Panc1 (cell line): ENCODE measurements at regions of chr3 and their contacts with region 1.

Region 1: DNA sequence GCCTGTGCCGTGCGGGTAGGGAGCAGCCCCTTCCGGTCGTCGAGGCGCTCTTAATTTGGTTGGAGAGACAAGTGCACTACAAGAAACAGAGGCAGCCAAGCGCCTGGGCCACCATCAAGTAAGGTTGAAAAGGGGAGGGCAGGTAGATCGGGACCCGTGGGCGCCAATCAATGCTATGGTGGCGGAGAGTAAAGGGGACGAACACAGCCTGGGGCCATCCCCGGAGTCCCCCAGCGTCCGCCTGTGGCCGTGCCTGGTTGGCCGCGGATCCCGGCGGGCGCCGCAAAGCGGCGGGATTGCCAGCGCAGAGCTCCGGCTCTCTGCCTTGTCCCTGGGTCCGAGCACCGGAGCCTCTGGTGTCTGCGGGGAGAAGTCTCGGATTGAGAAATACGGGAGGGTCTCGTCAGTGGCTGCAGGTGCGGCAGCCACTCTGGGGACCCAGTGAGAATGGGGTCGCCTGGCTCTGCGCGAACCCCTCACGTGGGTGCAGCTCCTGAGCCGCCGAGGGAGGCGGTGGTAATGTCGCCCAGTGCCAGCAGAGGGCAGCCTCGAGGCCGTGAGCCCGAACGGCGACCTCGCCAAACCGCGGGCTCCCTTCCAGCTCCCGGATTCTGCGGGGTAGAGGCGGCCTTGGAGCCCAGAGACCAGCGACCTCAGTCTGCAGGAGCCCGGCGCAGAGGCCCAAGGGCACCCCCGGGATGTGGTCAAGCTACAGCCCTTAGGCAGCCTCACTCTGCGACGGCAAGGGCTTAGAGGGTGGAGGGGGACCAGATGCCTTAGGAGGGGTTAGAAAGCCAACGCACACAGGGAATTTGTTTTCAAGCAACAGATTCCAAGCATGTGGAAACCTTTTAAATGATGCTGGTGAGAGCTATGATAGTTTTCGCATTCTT is 10.8 kb downstream of the FOXL2 start:
- DNase-seq: no peak
- ATAC-seq: peak; percentile 88
- H3K4me3 ChIP-seq: peak overlapping the region; percentile 45 to 57
- H3K27ac ChIP-seq: peak overlapping the region; percentile 75
- H3K4me1 ChIP-seq: peaks cover 14% of the 10 kb centered on the region
- H3K27me3 ChIP-seq: no peaks in the 10 kb centered on the region
- CTCF ChIP-seq: peak; percentile 98

Region 2: GRCh38 chr3:138578141-138578540 is 358.0 kb before region 1 on chr3:
- CTCF ChIA-PET with region 1: no interaction called
- POLR2A ChIA-PET with region 1: no interaction called
- in situ Hi-C with region 1: no loop called
- intact Hi-C with region 1: no loop called
- DNase-seq: no peak
- ATAC-seq: no peak
- H3K4me3 ChIP-seq: no peak overlapping the region
- H3K27ac ChIP-seq: peak overlapping the region; percentile 59
- H3K4me1 ChIP-seq: peaks cover 12% of the 10 kb centered on the region
- H3K27me3 ChIP-seq: no peaks in the 10 kb centered on the region
- CTCF ChIP-seq: no peak

Region 3: GRCh38 chr3:138834359-138835212 is 101.5 kb before region 1 on chr3 and contains the start of gene PIK3CB:
- CTCF ChIA-PET with region 1: no interaction called
- POLR2A ChIA-PET with region 1: no interaction called
- in situ Hi-C with region 1: no loop called
- intact Hi-C with region 1: no loop called
- DNase-seq: peak; percentile 38
- ATAC-seq: peak; percentile 99
- H3K4me3 ChIP-seq: peak within 1 kb of the TSS; percentile 85
- H3K27ac ChIP-seq: peak within 1 kb of the TSS; percentile 100
- H3K4me1 ChIP-seq: peaks cover 24% of the 10 kb centered on the region
- H3K27me3 ChIP-seq: no peaks in the 10 kb centered on the region
- CTCF ChIP-seq: no peak; the same call in 1 of the 2 replicates
- total RNA-seq, gene PIK3CB: 73.9 TPM

Region 4: GRCh38 chr3:138946181-138947059 is 10.3 kb after region 1 on chr3:
- CTCF ChIA-PET with region 1: interaction called, 18 read pairs
- POLR2A ChIA-PET with region 1: no interaction called
- in situ Hi-C with region 1: no loop called
- intact Hi-C with region 1: no loop called
- DNase-seq: no peak
- ATAC-seq: peak; percentile 64
- H3K4me3 ChIP-seq: peak overlapping the region; percentile 62 to 69
- H3K27ac ChIP-seq: peak overlapping the region; percentile 69
- H3K4me1 ChIP-seq: peaks cover 45% of the 10 kb centered on the region
- H3K27me3 ChIP-seq: no peaks in the 10 kb centered on the region; the same call in 1 of the 2 replicates
- CTCF ChIP-seq: peak; percentile 83

Region 5: DNA sequence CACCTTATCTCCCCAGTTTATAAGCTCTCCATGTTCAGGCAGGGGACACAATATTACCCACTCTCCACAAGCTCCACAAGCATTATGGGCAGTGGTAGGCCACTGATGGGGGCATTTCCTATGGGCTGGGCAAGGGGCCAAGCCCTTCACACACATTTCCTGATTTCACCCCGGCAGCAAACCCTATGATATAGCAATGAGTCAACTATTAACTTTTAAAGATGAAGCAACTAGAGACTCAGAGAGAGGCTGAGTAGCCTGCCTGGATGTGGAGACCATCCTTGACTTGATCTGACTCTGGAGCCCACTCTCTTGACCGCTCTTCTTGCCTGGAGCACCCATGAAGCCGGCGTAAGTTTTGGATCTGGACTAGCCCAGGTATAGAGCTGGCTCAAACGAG is 38.4 kb after region 1 on chr3:
- CTCF ChIA-PET with region 1: interaction called, 10 read pairs
- POLR2A ChIA-PET with region 1: no interaction called
- in situ Hi-C with region 1: no loop called
- intact Hi-C with region 1: loop called (anchors 5 kb)
- DNase-seq: no peak
- ATAC-seq: no peak; the same call in 1 of the 2 replicates
- H3K4me3 ChIP-seq: no peak overlapping the region
- H3K27ac ChIP-seq: no peak overlapping the region
- H3K4me1 ChIP-seq: no peaks in the 10 kb centered on the region
- H3K27me3 ChIP-seq: no peaks in the 10 kb centered on the region
- CTCF ChIP-seq: no peak

Region 6: DNA sequence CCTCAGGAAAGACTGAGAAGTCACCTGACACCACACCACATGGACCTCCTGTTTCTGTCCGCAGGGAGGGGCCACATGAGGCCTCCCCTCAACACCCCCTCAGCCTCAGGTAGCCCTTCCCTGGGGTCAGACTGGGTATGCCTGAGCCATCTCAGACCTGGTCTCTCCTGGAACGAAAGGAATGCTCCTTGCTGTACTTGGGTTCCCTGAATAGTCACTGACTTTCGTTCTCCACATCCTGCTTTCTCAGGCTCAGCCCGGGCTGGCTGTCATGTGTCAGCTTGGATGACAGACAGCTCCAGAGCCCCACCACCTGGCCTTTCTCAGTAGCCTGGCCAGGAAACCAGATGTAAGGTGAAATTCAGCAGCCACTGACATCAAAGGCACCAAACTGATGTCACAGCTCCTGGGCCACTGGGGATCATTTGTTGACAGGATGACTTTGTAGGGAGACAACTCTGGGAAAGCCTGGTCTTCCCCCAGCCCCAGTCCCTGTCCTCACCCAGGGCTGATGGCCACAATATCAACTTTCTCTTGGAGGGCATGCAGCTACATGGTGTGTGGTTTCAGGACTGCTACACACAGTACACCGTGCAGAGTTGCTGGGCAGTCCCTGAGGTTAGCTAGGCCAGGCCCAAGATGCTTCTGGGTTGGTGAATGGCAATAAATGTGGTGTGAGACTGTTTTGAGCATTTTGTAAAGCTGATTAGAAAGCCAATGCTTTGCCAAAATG is 266.3 kb after region 1 on chr3:
- CTCF ChIA-PET with region 1: interaction called, 10 read pairs
- POLR2A ChIA-PET with region 1: interaction called, 4 read pairs
- in situ Hi-C with region 1: no loop called
- intact Hi-C with region 1: no loop called
- DNase-seq: peak; percentile 10
- ATAC-seq: peak; percentile 89
- H3K4me3 ChIP-seq: no peak overlapping the region
- H3K27ac ChIP-seq: peak overlapping the region; percentile 52; the same call in 1 of the 2 replicates
- H3K4me1 ChIP-seq: peaks cover 16% of the 10 kb centered on the region
- H3K27me3 ChIP-seq: no peaks in the 10 kb centered on the region
- CTCF ChIP-seq: peak; percentile 68

Region 7: DNA sequence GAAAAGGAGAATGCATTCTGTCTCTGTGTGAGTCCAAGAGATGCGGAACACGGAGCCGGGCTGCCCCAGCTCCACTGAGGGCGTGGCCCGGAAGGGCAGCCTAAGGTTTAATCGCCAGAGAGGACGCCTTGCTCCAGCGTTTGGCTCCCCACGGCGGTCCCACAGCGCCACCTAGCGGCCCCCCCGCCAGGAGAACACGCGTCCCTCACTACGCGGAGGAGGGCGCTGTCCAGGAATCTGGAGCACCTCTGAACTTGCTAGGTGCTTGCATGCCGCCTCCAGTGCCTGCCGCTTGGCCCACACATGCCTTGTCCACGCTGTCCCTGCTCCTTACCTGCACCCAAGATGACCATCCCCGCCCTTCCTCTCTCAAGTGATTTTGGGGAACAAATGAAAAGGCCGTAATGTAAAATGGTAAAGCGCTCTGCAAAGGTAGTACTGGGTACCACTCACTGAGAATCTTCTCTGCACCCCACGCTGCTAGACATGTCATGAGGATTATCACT is 393.3 kb after region 1 on chr3:
- CTCF ChIA-PET with region 1: interaction called, 13 read pairs
- POLR2A ChIA-PET with region 1: no interaction called
- in situ Hi-C with region 1: no loop called
- intact Hi-C with region 1: loop called (anchors 1 kb)
- DNase-seq: peak; percentile 45
- ATAC-seq: peak; percentile 98
- H3K4me3 ChIP-seq: peak overlapping the region in 1 of 2 experiments; percentile 40; a peak in 2 of 4 replicates
- H3K27ac ChIP-seq: peak overlapping the region; percentile 71
- H3K4me1 ChIP-seq: peaks cover 7% of the 10 kb centered on the region
- H3K27me3 ChIP-seq: no peaks in the 10 kb centered on the region; the same call in 1 of the 2 replicates
- CTCF ChIP-seq: peak; percentile 100

Region 8: GRCh38 chr3:139394116-139394515 is 458.0 kb after region 1 on chr3:
- CTCF ChIA-PET with region 1: no interaction called
- POLR2A ChIA-PET with region 1: no interaction called
- in situ Hi-C with region 1: no loop called
- intact Hi-C with region 1: no loop called
- DNase-seq: no peak
- ATAC-seq: no peak
- H3K4me3 ChIP-seq: no peak overlapping the region
- H3K27ac ChIP-seq: no peak overlapping the region
- H3K4me1 ChIP-seq: peaks cover 6% of the 10 kb centered on the region; the same call in 1 of the 2 replicates
- H3K27me3 ChIP-seq: no peaks in the 10 kb centered on the region
- CTCF ChIP-seq: no peak